AG04450 (cell line): ENCODE measurements at regions of chr6 and their contacts with region 1.

Region 1: DNA sequence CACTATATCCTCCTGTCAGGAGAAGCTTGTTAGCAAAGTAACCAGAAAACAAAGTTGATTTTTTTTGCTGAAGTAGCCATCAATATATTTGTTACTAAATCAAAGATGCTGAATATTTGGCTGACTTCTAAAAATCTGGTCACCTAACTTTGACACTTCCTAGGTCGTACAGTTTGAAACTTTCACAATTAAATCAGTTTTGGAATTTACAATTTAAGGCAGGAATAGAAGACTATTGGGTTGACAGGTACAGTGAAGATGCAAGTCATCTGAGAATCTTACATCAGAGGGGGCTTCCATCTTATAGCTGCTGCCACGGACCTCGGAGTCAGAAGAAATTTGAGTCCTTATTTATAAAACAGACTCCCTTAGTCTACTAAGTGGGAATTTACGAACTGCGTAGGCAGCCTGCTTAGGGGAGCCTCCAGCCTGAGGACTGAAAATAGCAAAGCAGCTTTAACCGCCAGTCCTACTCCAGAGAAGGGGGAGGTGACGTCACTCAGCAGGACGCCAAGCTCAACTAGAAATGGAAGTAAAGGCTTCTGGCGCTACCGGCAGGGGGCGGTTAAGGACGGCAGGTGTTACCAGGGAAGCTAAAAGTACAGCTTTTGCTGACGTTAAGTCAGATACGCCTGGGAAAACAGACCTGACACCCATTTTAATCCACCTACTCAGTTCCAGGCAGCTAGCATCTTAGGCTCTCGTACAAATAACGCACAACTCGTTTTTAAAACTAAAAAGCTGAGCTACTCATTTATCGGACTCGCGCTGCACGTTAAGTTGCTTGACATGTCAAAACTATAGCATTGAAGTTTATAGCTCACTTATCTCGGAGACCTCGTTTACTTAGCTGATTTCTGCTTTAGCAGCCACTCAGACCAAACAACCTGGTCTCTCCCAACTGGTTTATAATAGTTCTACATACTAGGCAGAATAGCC is 61.1 kb upstream of the HFE start:
- DNase-seq: peak; percentile 94
- H3K4me3 ChIP-seq: peak overlapping the region; percentile 78
- H3K27ac ChIP-seq: peak overlapping the region; percentile 91
- H3K27me3 ChIP-seq: no peaks in the 10 kb centered on the region
- CTCF ChIP-seq: peak; percentile 93

Region 2: GRCh38 chr6:25297039-25297441 is 729.1 kb before region 1 on chr6:
- CTCF ChIA-PET with region 1: no interaction called
- POLR2A ChIA-PET with region 1: no interaction called
- DNase-seq: no peak
- H3K4me3 ChIP-seq: no peak overlapping the region
- H3K27ac ChIP-seq: no peak overlapping the region
- H3K27me3 ChIP-seq: no peaks in the 10 kb centered on the region
- CTCF ChIP-seq: no peak

Region 3: GRCh38 chr6:25889877-25890853 is 136.0 kb before region 1 on chr6:
- CTCF ChIA-PET with region 1: no interaction called
- POLR2A ChIA-PET with region 1: no interaction called
- DNase-seq: no peak
- H3K4me3 ChIP-seq: no peak overlapping the region
- H3K27ac ChIP-seq: no peak overlapping the region
- H3K27me3 ChIP-seq: no peaks in the 10 kb centered on the region
- CTCF ChIP-seq: peak; percentile 44

Region 4: GRCh38 chr6:26003102-26003694 is 23.0 kb before region 1 on chr6:
- CTCF ChIA-PET with region 1: interaction called, 20 read pairs
- POLR2A ChIA-PET with region 1: interaction called, 3 read pairs
- DNase-seq: no peak
- H3K4me3 ChIP-seq: no peak overlapping the region
- H3K27ac ChIP-seq: no peak overlapping the region
- H3K27me3 ChIP-seq: no peaks in the 10 kb centered on the region
- CTCF ChIP-seq: peak; percentile 86

Region 5: GRCh38 chr6:26045065-26045927 is 19.1 kb after region 1 on chr6:
- CTCF ChIA-PET with region 1: interaction called, 22 read pairs
- POLR2A ChIA-PET with region 1: interaction called, 272 read pairs
- DNase-seq: peak; percentile 82
- H3K4me3 ChIP-seq: peak overlapping the region; percentile 66
- H3K27ac ChIP-seq: peak overlapping the region; percentile 63
- H3K27me3 ChIP-seq: no peaks in the 10 kb centered on the region
- CTCF ChIP-seq: peak; percentile 19; the same call in 1 of the 2 replicates

Region 6: GRCh38 chr6:26103770-26104456 is 77.8 kb after region 1 on chr6:
- CTCF ChIA-PET with region 1: interaction called, 5 read pairs
- POLR2A ChIA-PET with region 1: interaction called, 11 read pairs
- DNase-seq: peak; percentile 88
- H3K4me3 ChIP-seq: peak overlapping the region; percentile 66
- H3K27ac ChIP-seq: peak overlapping the region; percentile 88
- H3K27me3 ChIP-seq: no peaks in the 10 kb centered on the region
- CTCF ChIP-seq: peak; percentile 62

Region 7: GRCh38 chr6:27838058-27838944 is 1812.1 kb after region 1 on chr6:
- CTCF ChIA-PET with region 1: no interaction called
- POLR2A ChIA-PET with region 1: interaction called, 14 read pairs
- DNase-seq: peak; percentile 99
- H3K4me3 ChIP-seq: peak overlapping the region; percentile 83
- H3K27ac ChIP-seq: peak overlapping the region; percentile 100
- H3K27me3 ChIP-seq: no peaks in the 10 kb centered on the region
- CTCF ChIP-seq: no peak